CD8-positive, alpha-beta T cell (primary cell): ENCODE measurements at regions of chr10 and their contacts with region 1.

Region 1: DNA sequence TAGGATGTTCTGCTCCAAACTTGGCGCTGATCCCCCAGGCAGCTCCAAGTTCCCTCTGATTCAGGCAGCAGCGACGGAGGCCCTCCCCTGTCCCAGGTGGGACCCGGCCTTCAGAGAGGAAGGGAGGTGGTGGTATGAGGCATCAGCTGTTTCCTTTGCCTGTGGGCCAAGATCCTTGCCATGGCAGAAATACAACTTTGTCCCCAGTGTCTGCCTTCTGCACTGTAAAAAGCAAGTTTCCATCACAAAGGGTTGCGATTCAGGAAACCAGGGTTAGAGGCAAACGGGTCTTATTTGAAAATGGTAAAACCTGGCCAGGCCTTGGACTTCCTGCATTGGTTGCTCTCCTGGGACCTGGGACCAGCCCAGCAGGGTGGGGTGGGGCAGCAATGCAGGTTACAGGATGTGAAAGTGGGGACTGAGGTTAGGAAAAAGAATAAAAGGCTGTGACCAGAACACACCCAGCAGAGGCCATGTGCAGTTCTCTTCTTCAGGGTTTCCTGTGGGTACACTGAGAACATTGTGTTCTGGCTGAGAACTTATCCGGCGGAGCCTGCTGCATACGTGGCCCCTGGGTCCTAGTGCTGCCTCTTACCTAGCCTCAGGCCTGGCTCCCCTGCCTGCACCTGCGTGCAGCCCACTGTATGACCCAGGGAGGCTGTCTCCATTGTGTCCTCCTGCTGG is 25.1 kb upstream of the DDIT4 start:
- DNase-seq: peak; percentile 40 to 91 (median 77)
- ATAC-seq: peak; percentile 88
- H3K4me3 ChIP-seq: peak overlapping the region; percentile 25 to 28
- H3K4me3 Mint-ChIP-seq: peak overlapping the region; percentile 81
- H3K27ac ChIP-seq: peak overlapping the region; percentile 61 to 64
- H3K27ac Mint-ChIP-seq: peak overlapping the region; percentile 96
- H3K4me1 ChIP-seq: peaks cover 90% of the 10 kb centered on the region
- H3K4me1 Mint-ChIP-seq: peaks cover 82% of the 10 kb centered on the region
- H3K27me3 ChIP-seq: no peaks in the 10 kb centered on the region
- H3K27me3 Mint-ChIP-seq: no peaks in the 10 kb centered on the region
- CTCF ChIP-seq: no peak

Region 2: DNA sequence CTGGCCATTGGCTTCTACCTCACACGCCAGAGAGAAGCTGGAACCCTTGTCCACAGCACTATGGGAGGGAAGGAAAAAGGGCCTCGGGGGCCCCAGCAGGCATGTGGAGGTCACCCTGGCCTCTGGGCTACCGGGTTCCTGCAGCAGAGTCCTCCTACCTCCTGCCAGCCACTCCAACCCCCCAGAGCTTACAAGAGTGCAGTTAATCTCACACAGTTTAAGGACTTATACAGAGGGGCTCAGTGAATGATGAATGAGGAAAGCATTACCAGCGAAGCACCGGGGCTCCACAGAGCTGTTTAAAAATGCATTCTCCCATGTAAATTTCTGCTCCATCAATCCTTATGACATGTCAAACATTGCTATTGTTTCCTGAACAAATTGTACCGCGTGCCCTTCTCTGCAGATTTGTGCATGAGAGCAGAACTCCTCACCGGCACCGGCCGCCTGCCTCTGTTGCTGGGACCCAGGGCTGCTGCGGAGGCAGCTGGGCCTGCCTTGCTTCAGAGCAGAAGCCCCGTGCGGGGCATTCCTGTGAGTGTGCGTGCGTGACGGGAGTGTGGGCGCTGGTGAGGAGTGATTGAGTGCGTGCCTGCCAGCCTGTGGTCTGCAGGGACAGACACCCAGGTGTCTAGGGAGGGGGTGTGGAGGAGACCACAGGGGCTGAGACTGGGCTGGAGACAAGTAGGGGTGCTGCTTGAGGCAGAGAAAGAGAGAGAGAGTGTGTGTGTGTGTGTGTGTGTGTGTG is 581.8 kb before region 1 on chr10:
- CTCF ChIA-PET with region 1: no interaction called
- POLR2A ChIA-PET with region 1: no interaction called
- intact Hi-C with region 1: no loop called
- DNase-seq: peak in 3 of 9 experiments; percentile 20 to 45 (median 24)
- ATAC-seq: peak; percentile 34
- H3K4me3 ChIP-seq: no peak overlapping the region
- H3K4me3 Mint-ChIP-seq: no peak overlapping the region
- H3K27ac ChIP-seq: no peak overlapping the region
- H3K27ac Mint-ChIP-seq: no peak overlapping the region
- H3K4me1 ChIP-seq: peaks cover 18% of the 10 kb centered on the region
- H3K4me1 Mint-ChIP-seq: peaks cover 21% of the 10 kb centered on the region
- H3K27me3 ChIP-seq: no peaks in the 10 kb centered on the region
- H3K27me3 Mint-ChIP-seq: no peaks in the 10 kb centered on the region
- CTCF ChIP-seq: no peak

Region 3: DNA sequence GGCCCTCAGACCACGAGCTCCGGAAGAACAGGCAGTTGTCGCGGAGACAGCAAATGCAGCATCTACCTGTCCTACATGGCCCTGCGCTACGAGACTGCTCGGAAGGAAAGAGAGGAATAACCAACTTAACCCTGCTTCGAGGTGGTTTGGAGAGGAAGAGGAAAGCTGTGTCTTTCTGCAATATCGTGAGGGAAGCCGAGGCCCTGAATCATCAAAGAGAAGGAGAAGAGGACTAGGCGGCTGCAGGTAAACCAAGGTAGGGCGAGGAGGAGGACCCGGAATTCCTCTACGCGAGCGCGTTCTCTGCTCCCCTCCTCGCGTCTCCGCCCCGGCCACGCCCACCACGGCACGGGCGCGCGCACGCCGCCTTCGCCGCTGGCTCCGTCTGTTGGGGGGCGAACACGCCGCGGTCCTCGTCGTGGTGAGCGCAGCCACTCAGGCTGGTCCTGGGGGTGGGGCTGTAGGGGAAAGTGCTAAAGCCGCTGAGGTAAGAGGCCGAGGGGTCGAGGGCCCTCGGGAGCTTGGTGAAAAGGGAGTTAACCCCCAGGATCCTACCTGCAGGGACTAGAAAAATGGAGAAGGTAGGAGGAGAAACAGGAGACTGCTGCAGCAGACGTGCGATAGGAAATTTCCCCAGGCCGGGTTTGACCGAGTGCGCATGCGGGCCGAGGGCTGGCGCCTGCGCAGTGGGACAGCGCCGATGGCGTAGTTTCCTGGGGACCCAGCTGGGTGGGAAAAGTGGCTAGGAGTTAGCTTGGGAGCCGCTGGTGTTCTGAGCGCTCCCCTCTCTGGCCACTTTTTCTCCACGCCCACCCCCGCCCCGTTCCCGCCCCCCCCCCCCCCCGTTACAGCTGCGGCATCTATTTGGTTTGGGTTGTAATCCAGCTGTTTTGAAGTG is 32.7 kb before region 1 on chr10 and contains the starts of genes ANAPC16 and ASCC1:
- CTCF ChIA-PET with region 1: no interaction called
- POLR2A ChIA-PET with region 1: interaction called, 14 read pairs
- intact Hi-C with region 1: loop called in 1 of 2 experiments (anchors 2 kb)
- DNase-seq: peak; percentile 90 to 98 (median 95)
- ATAC-seq: peak; percentile 83
- H3K4me3 ChIP-seq: peak within 1 kb of the TSS; percentile 78 to 82
- H3K4me3 Mint-ChIP-seq: peak within 1 kb of the TSS; percentile 100
- H3K27ac ChIP-seq: peak within 1 kb of the TSS; percentile 61 to 93
- H3K27ac Mint-ChIP-seq: peak within 1 kb of the TSS; percentile 100
- H3K4me1 ChIP-seq: peaks cover 58% of the 10 kb centered on the region
- H3K4me1 Mint-ChIP-seq: peaks cover 54% of the 10 kb centered on the region
- H3K27me3 ChIP-seq: no peaks in the 10 kb centered on the region
- H3K27me3 Mint-ChIP-seq: no peaks in the 10 kb centered on the region
- CTCF ChIP-seq: no peak
- total RNA-seq, gene ANAPC16: 46.6 to 48.0 TPM
- total RNA-seq, gene ASCC1: 16.5 to 19.1 TPM

Region 4: GRCh38 chr10:72260588-72261322 is 12.1 kb after region 1 on chr10:
- CTCF ChIA-PET with region 1: interaction called, 5 read pairs
- POLR2A ChIA-PET with region 1: interaction called, 10 read pairs
- intact Hi-C with region 1: loop called (anchors 1 kb)
- DNase-seq: peak; percentile 61 to 94 (median 84)
- ATAC-seq: peak; percentile 77
- H3K4me3 ChIP-seq: peak overlapping the region; percentile 56 to 69
- H3K4me3 Mint-ChIP-seq: peak overlapping the region; percentile 81
- H3K27ac ChIP-seq: peak overlapping the region; percentile 51 to 83
- H3K27ac Mint-ChIP-seq: peak overlapping the region; percentile 97
- H3K4me1 ChIP-seq: peaks cover 69% of the 10 kb centered on the region
- H3K4me1 Mint-ChIP-seq: peaks cover 69% of the 10 kb centered on the region
- H3K27me3 ChIP-seq: no peaks in the 10 kb centered on the region
- H3K27me3 Mint-ChIP-seq: no peaks in the 10 kb centered on the region
- CTCF ChIP-seq: no peak

Region 5: GRCh38 chr10:72297968-72298773 is 49.6 kb after region 1 on chr10:
- CTCF ChIA-PET with region 1: interaction called, 3 read pairs
- POLR2A ChIA-PET with region 1: interaction called, 11 read pairs
- intact Hi-C with region 1: loop called (anchors 1 kb)
- DNase-seq: peak; percentile 68 to 96 (median 83)
- ATAC-seq: peak; percentile 58
- H3K4me3 ChIP-seq: peak overlapping the region; percentile 53 to 57
- H3K4me3 Mint-ChIP-seq: peak overlapping the region; percentile 72
- H3K27ac ChIP-seq: peak overlapping the region; percentile 70 to 96
- H3K27ac Mint-ChIP-seq: peak overlapping the region; percentile 80
- H3K4me1 ChIP-seq: peaks cover 38% of the 10 kb centered on the region
- H3K4me1 Mint-ChIP-seq: peaks cover 41% of the 10 kb centered on the region
- H3K27me3 ChIP-seq: no peaks in the 10 kb centered on the region
- H3K27me3 Mint-ChIP-seq: no peaks in the 10 kb centered on the region
- CTCF ChIP-seq: no peak

Region 6: DNA sequence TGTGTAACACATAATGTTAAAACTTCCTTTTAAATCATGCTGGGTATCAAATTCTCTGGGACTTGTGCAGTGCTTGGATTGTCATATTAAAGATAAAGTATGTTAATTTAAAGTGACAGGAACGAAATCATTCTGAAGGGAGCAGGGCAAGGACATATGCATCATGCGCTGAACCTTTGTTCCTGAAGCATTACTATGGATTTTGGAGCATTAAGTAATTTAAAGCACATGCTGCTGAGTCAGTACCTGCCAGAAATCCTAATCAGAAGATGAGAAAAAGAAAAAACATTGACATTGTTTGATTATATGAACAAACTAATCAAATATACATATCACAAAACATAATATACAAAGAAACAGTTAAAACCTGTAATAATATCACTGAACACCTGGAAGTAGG is 275.9 kb after region 1 on chr10:
- CTCF ChIA-PET with region 1: no interaction called
- POLR2A ChIA-PET with region 1: no interaction called
- intact Hi-C with region 1: no loop called
- DNase-seq: no peak
- ATAC-seq: no peak
- H3K4me3 ChIP-seq: no peak overlapping the region
- H3K4me3 Mint-ChIP-seq: no peak overlapping the region
- H3K27ac ChIP-seq: no peak overlapping the region
- H3K27ac Mint-ChIP-seq: no peak overlapping the region
- H3K4me1 ChIP-seq: no peaks in the 10 kb centered on the region
- H3K4me1 Mint-ChIP-seq: no peaks in the 10 kb centered on the region
- H3K27me3 ChIP-seq: no peaks in the 10 kb centered on the region
- H3K27me3 Mint-ChIP-seq: no peaks in the 10 kb centered on the region
- CTCF ChIP-seq: no peak